Heart left ventricle (tissue), 16 donors: ENCODE measurements at regions of chr18 and their contacts with region 1.

Region 1: GRCh38 chr18:48711651-48712486 is 173.0 kb downstream of the CTIF start:
- DNase-seq: peak; percentile 44 to 67 (median 59)
- ATAC-seq: peak in 3 of 4 donors; percentile 53 to 61 (median 60)
- H3K4me3 ChIP-seq: no peak overlapping the region
- H3K27ac ChIP-seq: peak overlapping the region in 7 of 12 donors; percentile 16 to 93 (median 64)
- H3K4me1 ChIP-seq: peaks cover 2 to 86% (median 49%) of the 10 kb centered on the region in 12 donors
- H3K27me3 ChIP-seq: no peaks in the 10 kb centered on the region
- CTCF ChIP-seq: peak; percentile 30 to 75 (median 60)
- POLR2A ChIP-seq: no peak

Region 2: GRCh38 chr18:48767090-48767690 is 55.3 kb after region 1 on chr18:
- intact Hi-C with region 1: loop called in 2 of 10 experiments (anchors 5 to 10 kb)
- DNase-seq: peak in 4 of 5 donors; percentile 63 to 77 (median 70)
- ATAC-seq: peak; percentile 86 to 92 (median 90)
- H3K4me3 ChIP-seq: no peak overlapping the region
- H3K27ac ChIP-seq: peak overlapping the region; percentile 12 to 95 (median 79)
- H3K4me1 ChIP-seq: peaks cover 0 to 93% (median 45%) of the 10 kb centered on the region in 12 donors
- H3K27me3 ChIP-seq: no peaks in the 10 kb centered on the region
- CTCF ChIP-seq: no peak
- POLR2A ChIP-seq: no peak

Region 3: DNA sequence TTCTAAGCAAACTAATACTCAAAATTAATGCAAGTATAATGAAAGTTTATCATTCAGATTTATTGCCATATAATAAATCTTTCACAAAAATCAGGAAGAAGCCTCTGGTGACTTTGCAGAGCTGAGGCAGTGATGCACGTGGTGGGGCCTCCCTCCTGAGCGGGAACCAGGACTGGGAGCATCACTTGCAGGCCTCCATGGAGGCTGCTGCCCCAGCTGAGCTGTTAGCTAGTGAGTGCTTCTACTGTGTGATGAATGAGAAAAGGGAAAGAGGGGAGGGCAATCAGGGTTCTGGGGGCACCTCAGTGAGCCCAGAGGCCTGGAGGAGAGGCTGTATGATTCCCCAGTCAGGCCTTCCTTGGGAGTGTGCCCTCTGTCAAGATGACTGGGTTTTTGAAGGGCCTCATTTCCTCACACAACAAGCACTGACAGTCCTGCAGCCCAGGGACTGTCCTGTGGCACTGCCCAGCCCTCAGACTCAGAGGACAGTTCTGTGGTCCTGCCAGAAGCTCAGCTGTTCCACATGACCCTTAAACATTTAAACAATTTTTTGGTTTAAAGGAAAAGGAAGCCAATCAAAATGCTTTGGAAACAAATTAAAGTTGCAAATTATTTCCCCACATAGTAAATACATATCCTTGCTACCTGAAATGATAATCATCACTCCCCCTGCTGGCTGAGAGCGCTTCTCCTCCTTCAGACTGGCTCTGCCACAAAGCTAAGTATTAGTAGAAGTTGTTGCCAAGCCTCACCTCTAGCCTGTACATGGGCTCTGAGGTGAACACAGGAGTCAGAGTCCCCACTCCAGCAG is 329.8 kb after region 1 on chr18:
- intact Hi-C with region 1: loop called in 1 of 10 experiments (anchors 10 kb)
- DNase-seq: peak in 4 of 5 donors; percentile 40 to 64 (median 52)
- ATAC-seq: peak; percentile 58 to 81 (median 72)
- H3K4me3 ChIP-seq: no peak overlapping the region
- H3K27ac ChIP-seq: no peak overlapping the region
- H3K4me1 ChIP-seq: peaks cover 0 to 11% (median 0%) of the 10 kb centered on the region in 12 donors
- H3K27me3 ChIP-seq: no peaks in the 10 kb centered on the region
- CTCF ChIP-seq: peak; percentile 45 to 70 (median 61)
- POLR2A ChIP-seq: no peak

Region 4: DNA sequence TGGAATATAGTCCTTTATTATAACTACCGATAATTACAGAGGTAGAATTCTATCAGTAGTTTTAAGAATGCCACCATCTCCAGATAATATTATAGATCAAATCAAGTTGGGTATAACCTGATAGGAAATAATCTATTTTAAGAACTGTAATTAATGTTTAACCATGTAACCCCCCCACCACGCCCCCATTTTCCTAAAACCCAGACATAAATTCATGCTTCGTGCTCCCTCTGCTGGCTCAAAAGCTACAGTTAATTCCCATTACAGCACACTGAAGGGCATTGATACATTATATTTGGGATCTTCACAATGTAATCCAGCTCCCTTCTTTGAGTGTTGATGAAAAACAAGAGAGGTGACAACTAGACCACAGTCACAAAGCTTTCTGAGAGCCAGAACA is 466.9 kb after region 1 on chr18:
- intact Hi-C with region 1: loop called in 3 of 10 experiments (anchors 10 kb)
- DNase-seq: peak in 1 of 5 donors; percentile 27
- ATAC-seq: no peak
- H3K4me3 ChIP-seq: no peak overlapping the region
- H3K27ac ChIP-seq: no peak overlapping the region
- H3K4me1 ChIP-seq: peaks cover 0 to 27% (median 0%) of the 10 kb centered on the region in 12 donors
- H3K27me3 ChIP-seq: no peaks in the 10 kb centered on the region
- CTCF ChIP-seq: peak; percentile 18 to 65 (median 54)
- POLR2A ChIP-seq: no peak